MCF 10A (cell line): ENCODE measurements at regions of chr6 and their contacts with region 1.

Region 1: GRCh38 chr6:44265007-44265721 is at the start of gene NFKBIE:
- DNase-seq: peak; percentile 92
- H3K4me3 Mint-ChIP-seq: peak within 1 kb of the TSS; percentile 91
- H3K27ac Mint-ChIP-seq: peak within 1 kb of the TSS; percentile 77
- H3K4me1 Mint-ChIP-seq: peaks cover 23% of the 10 kb centered on the region
- H3K27me3 Mint-ChIP-seq: peaks cover 9% of the 10 kb centered on the region
- CTCF ChIP-seq: no peak
- total RNA-seq, gene NFKBIE: 6.0 and 8.8 TPM in 2 replicates

Region 2: GRCh38 chr6:44199883-44200282 is 65.3 kb before region 1 on chr6:
- CTCF ChIA-PET with region 1: no interaction called
- POLR2A ChIA-PET with region 1: no interaction called
- intact Hi-C with region 1: no loop called
- DNase-seq: no peak
- H3K4me3 Mint-ChIP-seq: no peak overlapping the region
- H3K27ac Mint-ChIP-seq: no peak overlapping the region
- H3K4me1 Mint-ChIP-seq: peaks cover 20% of the 10 kb centered on the region
- H3K27me3 Mint-ChIP-seq: no peaks in the 10 kb centered on the region
- CTCF ChIP-seq: no peak

Region 3: GRCh38 chr6:44304282-44305199 is 39.4 kb after region 1 on chr6:
- CTCF ChIA-PET with region 1: interaction called, 19 read pairs
- POLR2A ChIA-PET with region 1: interaction called, 7 read pairs
- intact Hi-C with region 1: loop called (anchors 2 kb)
- DNase-seq: peak; percentile 26
- H3K4me3 Mint-ChIP-seq: no peak overlapping the region
- H3K27ac Mint-ChIP-seq: no peak overlapping the region
- H3K4me1 Mint-ChIP-seq: peaks cover 9% of the 10 kb centered on the region
- H3K27me3 Mint-ChIP-seq: no peaks in the 10 kb centered on the region
- CTCF ChIP-seq: peak; percentile 53

Region 4: DNA sequence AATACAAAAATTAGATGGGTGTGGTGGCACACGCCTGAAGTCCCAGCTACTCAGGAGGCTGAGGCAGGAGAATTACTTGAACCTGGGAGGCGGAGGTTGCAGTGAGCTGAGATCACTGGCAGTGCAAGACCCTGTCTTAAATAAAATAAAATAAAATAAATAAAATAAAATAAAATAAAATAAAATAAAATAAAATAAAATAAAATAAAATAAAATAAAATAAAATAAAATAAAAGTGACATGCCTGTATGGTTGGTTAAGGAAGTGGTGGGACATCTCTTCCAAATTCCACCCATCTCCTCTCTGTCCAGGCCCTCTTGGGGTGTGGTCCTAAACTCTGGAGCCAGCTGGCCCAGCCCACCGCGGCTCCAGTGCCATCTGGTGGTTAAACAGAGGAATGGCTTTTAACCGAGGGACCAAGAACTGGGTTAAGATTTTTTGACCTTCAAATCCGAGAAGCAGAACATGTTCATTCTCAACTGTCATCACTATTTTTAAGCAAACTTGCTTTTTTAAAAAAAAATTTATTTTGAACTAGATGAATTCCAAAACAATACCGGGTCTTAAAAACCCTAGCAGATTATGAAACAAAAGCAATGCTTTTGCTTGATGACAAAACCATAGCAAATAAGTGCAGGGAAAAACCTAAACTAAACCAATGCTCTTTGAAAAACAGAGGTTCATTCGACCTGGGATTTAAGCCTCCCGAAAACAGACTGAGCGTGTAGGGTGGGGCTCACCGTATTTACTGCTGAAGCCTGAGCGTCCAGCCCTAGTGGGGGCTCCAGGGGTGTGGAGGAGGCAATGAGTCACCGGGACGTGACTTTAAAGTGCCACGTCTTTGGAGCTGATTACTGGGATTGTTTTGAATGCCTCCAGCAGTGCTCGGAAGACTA is 191.2 kb after region 1 on chr6:
- CTCF ChIA-PET with region 1: interaction called, 6 read pairs
- POLR2A ChIA-PET with region 1: interaction called, 3 read pairs
- intact Hi-C with region 1: loop called (anchors 5 kb)
- DNase-seq: peak; percentile 76
- H3K4me3 Mint-ChIP-seq: no peak overlapping the region
- H3K27ac Mint-ChIP-seq: no peak overlapping the region
- H3K4me1 Mint-ChIP-seq: peaks cover 20% of the 10 kb centered on the region
- H3K27me3 Mint-ChIP-seq: no peaks in the 10 kb centered on the region
- CTCF ChIP-seq: peak; percentile 88